Natural killer cell (primary cell): ENCODE measurements at regions of chrX and their contacts with region 1.

Region 1: DNA sequence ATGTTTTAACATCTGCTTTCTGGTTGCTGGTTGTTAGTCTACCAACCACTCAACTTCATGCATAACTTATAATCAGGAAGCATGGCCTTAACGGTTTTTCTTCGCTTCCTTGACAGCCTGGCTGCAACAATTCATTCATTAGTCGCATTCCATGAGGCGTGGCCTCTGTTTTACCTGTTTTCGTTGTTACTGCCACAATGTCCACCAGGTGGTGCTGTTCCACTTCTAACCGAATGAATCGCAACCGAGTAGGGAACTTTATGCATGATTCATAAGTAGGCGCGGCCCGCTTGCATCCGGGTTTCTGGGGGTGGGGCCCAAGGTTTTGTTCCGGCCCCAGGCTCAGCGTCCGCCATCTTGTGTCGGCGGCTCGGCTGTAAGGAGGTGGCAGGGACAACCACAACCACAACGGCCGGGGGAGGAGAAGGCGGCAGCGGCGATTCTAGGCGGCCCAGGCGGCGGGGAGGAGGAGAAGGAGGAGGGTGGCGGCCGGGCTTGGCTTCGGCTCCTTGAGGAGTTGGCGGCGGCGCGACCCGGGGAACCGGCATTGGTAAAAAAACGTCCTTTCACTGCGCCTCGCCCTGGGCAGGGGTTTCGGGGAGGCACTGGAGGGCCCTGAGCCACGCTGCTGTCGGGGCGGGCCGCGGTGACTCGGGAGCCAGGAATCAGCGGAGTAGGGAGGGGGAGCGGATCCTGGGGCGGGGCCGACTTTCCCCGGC is at the start of gene UBA1:
- DNase-seq: peak; percentile 84 to 96
- ATAC-seq: peak; percentile 76 to 90 (median 84)
- H3K4me3 ChIP-seq: peak within 1 kb of the TSS; percentile 98
- H3K4me3 Mint-ChIP-seq: peak within 1 kb of the TSS; percentile 98
- H3K27ac ChIP-seq: peak within 1 kb of the TSS; percentile 93
- H3K27ac Mint-ChIP-seq: peak within 1 kb of the TSS; percentile 93 to 98
- H3K4me1 ChIP-seq: peaks cover 70% of the 10 kb centered on the region
- H3K4me1 Mint-ChIP-seq: peaks cover 51 to 54% of the 10 kb centered on the region in 2 donors
- H3K27me3 ChIP-seq: no peaks in the 10 kb centered on the region
- H3K27me3 Mint-ChIP-seq: no peaks in the 10 kb centered on the region
- CTCF ChIP-seq: peak; percentile 59
- total RNA-seq, gene UBA1: 118 to 168 (median 120) TPM

Region 2: DNA sequence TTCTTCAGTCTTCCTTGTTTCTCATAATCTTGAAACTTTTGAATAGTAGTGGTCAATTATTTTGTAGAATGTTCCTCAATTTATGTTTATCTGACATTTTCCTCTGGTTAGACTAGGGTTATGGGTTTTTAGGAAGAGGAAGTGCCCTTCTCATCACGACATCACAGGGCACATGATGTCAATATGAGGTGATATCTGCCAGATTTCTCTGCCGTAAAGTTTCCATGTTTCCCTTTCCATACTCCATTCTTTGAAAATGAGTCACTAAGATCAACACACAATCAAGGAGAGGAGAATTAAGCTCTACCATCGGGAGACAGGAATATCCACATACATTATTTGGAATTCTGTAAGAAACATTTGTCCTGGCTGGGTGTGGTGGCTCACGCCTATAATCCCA is 328.4 kb before region 1 on chrX:
- intact Hi-C with region 1: no loop called
- DNase-seq: no peak
- ATAC-seq: no peak
- H3K4me3 ChIP-seq: no peak overlapping the region
- H3K4me3 Mint-ChIP-seq: no peak overlapping the region
- H3K27ac ChIP-seq: no peak overlapping the region
- H3K27ac Mint-ChIP-seq: no peak overlapping the region
- H3K4me1 ChIP-seq: no peaks in the 10 kb centered on the region
- H3K4me1 Mint-ChIP-seq: no peaks in the 10 kb centered on the region
- H3K27me3 ChIP-seq: no peaks in the 10 kb centered on the region
- H3K27me3 Mint-ChIP-seq: no peaks in the 10 kb centered on the region
- CTCF ChIP-seq: no peak

Region 3: GRCh38 chrX:47217642-47218279 is 24.1 kb after region 1 on chrX:
- intact Hi-C with region 1: loop called (anchors 1 kb)
- DNase-seq: peak; percentile 85 to 96
- ATAC-seq: peak; percentile 77 to 91 (median 77)
- H3K4me3 ChIP-seq: peak overlapping the region; percentile 76
- H3K4me3 Mint-ChIP-seq: peak overlapping the region; percentile 94
- H3K27ac ChIP-seq: peak overlapping the region; percentile 100
- H3K27ac Mint-ChIP-seq: peak overlapping the region; percentile 95 to 98
- H3K4me1 ChIP-seq: peaks cover 25% of the 10 kb centered on the region
- H3K4me1 Mint-ChIP-seq: peaks cover 36 to 50% of the 10 kb centered on the region in 2 donors
- H3K27me3 ChIP-seq: no peaks in the 10 kb centered on the region
- H3K27me3 Mint-ChIP-seq: no peaks in the 10 kb centered on the region
- CTCF ChIP-seq: no peak

Region 4: DNA sequence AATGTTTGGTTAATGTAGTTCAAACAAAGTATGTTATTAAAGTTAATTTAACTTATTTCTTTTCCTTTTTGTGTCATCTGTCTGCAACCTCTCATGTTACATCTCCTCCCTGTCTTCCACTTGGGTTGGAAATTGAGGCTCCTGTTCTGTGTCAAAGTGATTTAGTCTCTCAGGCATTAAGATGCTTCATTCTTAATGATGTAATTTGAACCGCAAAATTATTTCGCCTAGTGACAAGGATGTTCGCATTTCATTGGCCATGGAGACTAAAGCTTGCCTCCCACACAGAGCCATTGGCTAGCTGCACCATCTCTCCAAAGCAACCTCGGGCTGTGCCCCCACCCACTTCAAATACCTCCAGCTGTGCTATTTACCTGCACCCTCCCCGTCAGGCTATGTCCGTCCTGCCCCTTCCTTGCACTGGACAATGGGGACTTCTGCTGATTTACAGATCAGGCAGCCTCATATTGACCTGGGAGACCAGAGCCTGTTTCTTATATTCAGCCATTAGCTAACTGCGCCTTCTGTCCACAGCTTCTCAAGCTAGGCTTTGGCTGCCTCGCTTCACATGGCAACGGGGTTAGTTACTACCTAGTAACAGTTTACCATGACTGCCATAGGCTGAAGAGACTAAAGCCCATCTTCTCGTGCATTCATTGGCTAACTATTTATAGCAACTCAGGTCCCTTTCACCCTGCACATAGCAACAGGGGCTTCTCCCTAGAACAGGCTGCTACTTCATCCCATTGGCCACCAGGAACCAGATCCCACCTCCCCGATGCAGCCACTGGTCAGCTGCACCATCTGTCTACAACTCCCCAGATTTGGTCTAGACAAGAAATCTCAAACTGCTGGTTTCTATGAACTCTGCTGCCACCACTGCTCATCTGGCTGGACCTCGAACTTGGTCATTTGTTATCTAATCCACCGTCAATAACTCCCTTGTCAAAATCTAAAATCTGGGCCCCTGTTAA is 168.2 kb after region 1 on chrX:
- intact Hi-C with region 1: loop called (anchors 5 kb)
- DNase-seq: peak; percentile 55 to 74
- ATAC-seq: peak; percentile 74 to 92 (median 81)
- H3K4me3 ChIP-seq: peak overlapping the region; percentile 37
- H3K4me3 Mint-ChIP-seq: peak overlapping the region; percentile 80
- H3K27ac ChIP-seq: peak overlapping the region; percentile 84
- H3K27ac Mint-ChIP-seq: peak overlapping the region; percentile 91 to 97
- H3K4me1 ChIP-seq: peaks cover 31% of the 10 kb centered on the region
- H3K4me1 Mint-ChIP-seq: peaks cover 35 to 37% of the 10 kb centered on the region in 2 donors
- H3K27me3 ChIP-seq: no peaks in the 10 kb centered on the region
- H3K27me3 Mint-ChIP-seq: peaks cover 0 to 8% of the 10 kb centered on the region in 2 donors
- CTCF ChIP-seq: no peak

Region 5: DNA sequence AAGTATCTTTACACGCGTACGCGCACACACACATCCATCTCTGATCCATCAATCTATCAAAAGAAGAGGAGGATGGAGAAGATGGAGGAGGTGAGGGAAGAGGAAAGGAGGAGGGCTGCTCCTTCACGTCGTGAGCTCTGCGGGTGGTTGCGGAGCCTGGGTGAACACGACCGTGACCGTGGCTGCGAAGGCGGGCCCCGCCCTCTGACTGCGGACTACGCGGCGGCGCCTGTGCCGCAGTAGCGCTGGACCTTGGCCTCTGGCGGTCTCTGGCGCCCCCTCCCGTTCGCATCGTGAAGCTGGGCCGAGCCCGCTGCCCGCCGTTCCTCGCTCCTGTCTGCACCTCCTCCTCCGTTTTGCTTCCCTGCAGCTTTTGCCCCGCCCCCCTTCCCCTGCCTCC is 329.7 kb after region 1 on chrX:
- intact Hi-C with region 1: loop called (anchors 1 kb)
- DNase-seq: peak; percentile 76 to 85
- ATAC-seq: peak; percentile 96 to 99 (median 98)
- H3K4me3 ChIP-seq: peak overlapping the region; percentile 50
- H3K4me3 Mint-ChIP-seq: peak overlapping the region; percentile 74
- H3K27ac ChIP-seq: no peak overlapping the region
- H3K27ac Mint-ChIP-seq: peak overlapping the region in 1 of 2 donors; percentile 51
- H3K4me1 ChIP-seq: peaks cover 9% of the 10 kb centered on the region
- H3K4me1 Mint-ChIP-seq: no peaks in the 10 kb centered on the region
- H3K27me3 ChIP-seq: no peaks in the 10 kb centered on the region
- H3K27me3 Mint-ChIP-seq: no peaks in the 10 kb centered on the region
- CTCF ChIP-seq: peak; percentile 74

Region 6: DNA sequence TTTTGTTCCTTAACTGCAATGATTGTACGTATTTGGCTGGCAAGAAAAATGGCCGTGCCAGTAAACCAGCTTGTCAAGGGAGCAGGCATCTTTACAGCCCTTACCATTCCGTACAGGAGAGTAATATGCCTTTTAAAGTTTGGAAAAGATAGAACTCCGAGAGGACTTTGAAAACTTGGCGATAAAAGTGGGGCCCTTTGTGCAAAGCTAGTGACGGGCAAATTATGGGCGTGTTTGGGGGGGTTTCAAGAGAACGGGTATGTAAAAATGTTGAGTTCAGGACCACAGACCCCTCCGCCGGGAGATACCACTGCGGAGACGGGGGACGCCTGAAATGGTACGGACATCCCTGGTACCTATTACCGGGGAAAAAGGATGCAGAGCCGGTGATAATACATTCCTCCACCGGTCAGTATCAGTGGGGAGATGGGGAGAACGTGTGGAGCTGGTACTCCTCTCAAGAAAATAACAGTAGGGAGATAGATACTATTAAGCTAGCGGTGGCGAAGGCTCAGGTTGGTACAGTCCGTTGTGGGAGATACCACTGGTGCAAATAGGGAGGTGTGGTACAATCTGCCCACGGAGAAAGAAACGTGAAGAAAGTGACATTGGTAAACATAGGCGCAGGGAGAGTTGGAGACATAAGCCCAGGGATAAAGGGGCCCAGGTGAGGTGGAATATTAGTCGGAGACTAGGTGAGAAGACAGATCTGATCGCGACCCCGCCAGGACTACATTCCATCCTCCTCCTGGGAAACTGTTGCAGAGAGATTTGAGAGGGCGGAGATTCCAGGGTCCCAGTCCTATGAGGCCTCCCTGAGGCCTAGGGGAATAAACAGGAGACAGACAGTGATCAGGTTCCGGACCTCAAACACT is 827.6 kb after region 1 on chrX:
- intact Hi-C with region 1: loop called (anchors 5 kb)
- DNase-seq: peak; percentile 76 to 88
- ATAC-seq: peak; percentile 79 to 88 (median 79)
- H3K4me3 ChIP-seq: peak overlapping the region; percentile 75
- H3K4me3 Mint-ChIP-seq: peak overlapping the region; percentile 98
- H3K27ac ChIP-seq: peak overlapping the region; percentile 94
- H3K27ac Mint-ChIP-seq: peak overlapping the region; percentile 91 to 99
- H3K4me1 ChIP-seq: peaks cover 6% of the 10 kb centered on the region
- H3K4me1 Mint-ChIP-seq: peaks cover 12 to 13% of the 10 kb centered on the region in 2 donors
- H3K27me3 ChIP-seq: no peaks in the 10 kb centered on the region
- H3K27me3 Mint-ChIP-seq: no peaks in the 10 kb centered on the region
- CTCF ChIP-seq: no peak